ENCODE measurements at regions of chr9 and their contacts with region 1.

Region 1: GRCh38 chr9:136790927-136791641 is at the start of gene TMEM141:
- DNase-seq: peak; percentile 98
- H3K4me3 ChIP-seq: peak within 1 kb of the TSS; percentile 72 to 93 (median 77)
- H3K27ac ChIP-seq: peak within 1 kb of the TSS; percentile 88
- H3K4me1 ChIP-seq: peaks cover 18% of the 10 kb centered on the region
- H3K27me3 ChIP-seq: no peaks in the 10 kb centered on the region
- CTCF ChIP-seq: no peak
- total RNA-seq, gene TMEM141: 38.8 to 95.4 TPM

Region 2: GRCh38 chr9:136728080-136728547 is 63.0 kb before region 1 on chr9:
- CTCF ChIA-PET with region 1: no interaction called
- dilution Hi-C with region 1: no loop called
- in situ Hi-C with region 1: no loop called
- intact Hi-C with region 1: loop called (anchors 2 kb)
- DNase-seq: peak; percentile 80
- H3K4me3 ChIP-seq: peak overlapping the region; percentile 71 to 88 (median 87)
- H3K27ac ChIP-seq: peak overlapping the region; percentile 55
- H3K4me1 ChIP-seq: peaks cover 21% of the 10 kb centered on the region
- H3K27me3 ChIP-seq: no peaks in the 10 kb centered on the region
- CTCF ChIP-seq: peak in 1 of 2 donors; percentile 80

Region 3: GRCh38 chr9:136849038-136849959 is 58.2 kb after region 1 on chr9 and contains the start of gene PHPT1:
- CTCF ChIA-PET with region 1: no interaction called
- dilution Hi-C with region 1: no loop called
- in situ Hi-C with region 1: no loop called
- intact Hi-C with region 1: no loop called
- DNase-seq: peak; percentile 98
- H3K4me3 ChIP-seq: peak within 1 kb of the TSS; percentile 82 to 93 (median 92)
- H3K27ac ChIP-seq: peak within 1 kb of the TSS; percentile 67
- H3K4me1 ChIP-seq: peaks cover 19% of the 10 kb centered on the region
- H3K27me3 ChIP-seq: peaks cover 22% of the 10 kb centered on the region
- CTCF ChIP-seq: no peak
- total RNA-seq, gene PHPT1: 55.3 to 143 TPM

Region 4: DNA sequence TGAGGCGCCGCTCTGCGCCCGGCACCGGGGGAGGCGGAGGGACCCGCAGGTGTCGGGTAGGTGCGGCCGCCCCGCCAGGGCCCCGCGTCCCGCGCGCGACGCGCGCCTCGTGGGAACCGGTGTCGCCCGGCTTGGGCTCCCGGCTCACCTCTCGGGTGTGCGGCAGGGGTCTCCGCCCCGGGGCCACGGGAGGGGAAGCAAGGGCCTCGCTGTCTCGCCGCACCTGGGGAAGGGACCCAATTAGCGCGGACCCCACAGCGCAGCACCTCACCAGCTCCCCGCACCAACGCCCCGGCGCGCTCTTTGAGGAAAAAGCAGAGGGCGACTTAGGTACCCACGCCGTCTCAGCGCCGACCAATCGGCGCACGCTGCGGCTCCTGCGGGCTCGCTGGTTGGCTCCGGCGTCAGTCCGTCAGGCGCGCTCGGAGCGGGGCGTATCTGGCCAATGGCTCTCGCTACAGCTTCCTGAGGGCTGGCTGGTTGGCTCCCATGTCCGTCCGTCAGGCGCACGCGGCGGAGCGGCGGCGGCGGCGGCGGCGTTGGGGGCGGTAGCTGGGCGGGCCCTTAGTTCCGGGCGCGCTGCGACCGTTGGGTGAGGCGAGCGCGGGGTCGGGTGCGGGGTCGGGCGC is 95.0 kb after region 1 on chr9 and contains the start of gene TRAF2:
- CTCF ChIA-PET with region 1: no interaction called
- dilution Hi-C with region 1: no loop called
- in situ Hi-C with region 1: no loop called
- intact Hi-C with region 1: loop called (anchors 5 kb)
- DNase-seq: peak; percentile 100
- H3K4me3 ChIP-seq: peak within 1 kb of the TSS; percentile 55 to 83 (median 82)
- H3K27ac ChIP-seq: peak within 1 kb of the TSS; percentile 65
- H3K4me1 ChIP-seq: peaks cover 40% of the 10 kb centered on the region
- H3K27me3 ChIP-seq: no peaks in the 10 kb centered on the region
- CTCF ChIP-seq: no peak
- total RNA-seq, gene TRAF2: 8.3 to 27.8 TPM

Region 5: GRCh38 chr9:136902259-136902821 is 111.3 kb after region 1 on chr9:
- CTCF ChIA-PET with region 1: no interaction called
- dilution Hi-C with region 1: no loop called
- in situ Hi-C with region 1: no loop called
- intact Hi-C with region 1: loop called (anchors 5 kb)
- DNase-seq: peak; percentile 90
- H3K4me3 ChIP-seq: peak overlapping the region in 1 of 3 experiments; percentile 28
- H3K27ac ChIP-seq: peak overlapping the region; percentile 94
- H3K4me1 ChIP-seq: peaks cover 33% of the 10 kb centered on the region
- H3K27me3 ChIP-seq: no peaks in the 10 kb centered on the region
- CTCF ChIP-seq: no peak

Region 6: GRCh38 chr9:137034863-137035761 is 244.0 kb after region 1 on chr9:
- CTCF ChIA-PET with region 1: no interaction called
- dilution Hi-C with region 1: no loop called
- in situ Hi-C with region 1: loop called (anchors 10 to 25 kb)
- intact Hi-C with region 1: loop called (anchors 1 kb)
- DNase-seq: peak; percentile 68
- H3K4me3 ChIP-seq: no peak overlapping the region
- H3K27ac ChIP-seq: no peak overlapping the region
- H3K4me1 ChIP-seq: peaks cover 17% of the 10 kb centered on the region
- H3K27me3 ChIP-seq: no peaks in the 10 kb centered on the region
- CTCF ChIP-seq: peak; percentile 82 to 94

Region 7: GRCh38 chr9:137070201-137070905 is 279.3 kb after region 1 on chr9 and contains the start of gene SAPCD2:
- CTCF ChIA-PET with region 1: no interaction called
- dilution Hi-C with region 1: no loop called
- in situ Hi-C with region 1: no loop called
- intact Hi-C with region 1: loop called (anchors 10 kb)
- DNase-seq: peak; percentile 85
- H3K4me3 ChIP-seq: peak within 1 kb of the TSS; percentile 22 to 52 (median 47)
- H3K27ac ChIP-seq: no peak within 1 kb of the TSS
- H3K4me1 ChIP-seq: peaks cover 21% of the 10 kb centered on the region
- H3K27me3 ChIP-seq: no peaks in the 10 kb centered on the region
- CTCF ChIP-seq: no peak
- total RNA-seq, gene SAPCD2: 1.0 to 6.9 TPM

Region 8: DNA sequence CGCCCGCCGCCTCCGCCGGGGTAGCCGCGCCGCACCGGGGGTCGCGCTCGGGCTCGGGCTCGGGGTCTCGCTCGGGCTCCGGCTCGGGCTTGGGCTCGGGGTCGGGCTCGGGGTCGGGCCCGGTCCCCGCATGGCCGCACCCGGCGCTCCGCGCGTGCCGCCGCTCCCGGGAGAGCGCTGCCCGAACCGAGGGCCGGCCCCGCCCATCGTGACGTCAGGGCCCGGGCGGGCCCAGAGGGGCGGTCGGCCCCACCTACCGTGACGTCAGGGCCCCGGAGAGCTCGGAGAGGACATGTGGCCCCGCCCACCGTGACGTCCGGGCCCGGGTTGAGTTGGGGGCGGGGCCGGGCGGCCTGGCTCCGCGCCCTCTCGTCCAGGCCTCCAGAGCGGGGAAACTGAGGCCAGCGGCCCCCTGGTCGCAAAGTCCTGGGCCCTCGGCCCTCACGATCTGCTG is 668.1 kb after region 1 on chr9 and contains the start of gene NSMF:
- CTCF ChIA-PET with region 1: no interaction called
- dilution Hi-C with region 1: no loop called
- in situ Hi-C with region 1: no loop called
- intact Hi-C with region 1: loop called (anchors 10 kb)
- DNase-seq: peak; percentile 84
- H3K4me3 ChIP-seq: peak within 1 kb of the TSS; percentile 44 to 91 (median 79)
- H3K27ac ChIP-seq: peak within 1 kb of the TSS; percentile 41
- H3K4me1 ChIP-seq: peaks cover 15% of the 10 kb centered on the region
- H3K27me3 ChIP-seq: no peaks in the 10 kb centered on the region
- CTCF ChIP-seq: no peak
- total RNA-seq, gene NSMF: 29.7 to 42.0 TPM